Naive thymus-derived CD4-positive, alpha-beta T cell (primary cell): ENCODE measurements at regions of chr9 and their contacts with region 1.

Region 1: GRCh38 chr9:2023532-2023931 is 8.4 kb downstream of the SMARCA2 start:
- DNase-seq: no peak
- ATAC-seq: no peak
- H3K4me3 ChIP-seq: peak overlapping the region; percentile 37
- H3K4me3 Mint-ChIP-seq: peak overlapping the region; percentile 61 to 100 (median 74)
- H3K27ac ChIP-seq: peak overlapping the region; percentile 14
- H3K27ac Mint-ChIP-seq: peak overlapping the region in 8 of 9 donors; percentile 64 to 92 (median 84)
- H3K4me1 ChIP-seq: peaks cover 92 to 93% of the 10 kb centered on the region in 2 donors
- H3K4me1 Mint-ChIP-seq: peaks cover 78 to 100% (median 95%) of the 10 kb centered on the region in 7 donors
- H3K27me3 ChIP-seq: no peaks in the 10 kb centered on the region
- H3K27me3 Mint-ChIP-seq: no peaks in the 10 kb centered on the region

Region 2: GRCh38 chr9:2000314-2000713 is 23.2 kb before region 1 on chr9:
- CTCF ChIA-PET with region 1: no interaction called
- POLR2A ChIA-PET with region 1: no interaction called
- intact Hi-C with region 1: loop called in 1 of 2 experiments (anchors 2 kb)
- DNase-seq: no peak
- ATAC-seq: peak; percentile 32
- H3K4me3 ChIP-seq: no peak overlapping the region
- H3K4me3 Mint-ChIP-seq: no peak overlapping the region
- H3K27ac ChIP-seq: no peak overlapping the region
- H3K27ac Mint-ChIP-seq: no peak overlapping the region
- H3K4me1 ChIP-seq: peaks cover 0 to 9% of the 10 kb centered on the region in 2 donors
- H3K4me1 Mint-ChIP-seq: peaks cover 5 to 22% (median 14%) of the 10 kb centered on the region in 7 donors
- H3K27me3 ChIP-seq: no peaks in the 10 kb centered on the region
- H3K27me3 Mint-ChIP-seq: peaks cover 0 to 27% (median 6%) of the 10 kb centered on the region in 5 donors

Region 3: DNA sequence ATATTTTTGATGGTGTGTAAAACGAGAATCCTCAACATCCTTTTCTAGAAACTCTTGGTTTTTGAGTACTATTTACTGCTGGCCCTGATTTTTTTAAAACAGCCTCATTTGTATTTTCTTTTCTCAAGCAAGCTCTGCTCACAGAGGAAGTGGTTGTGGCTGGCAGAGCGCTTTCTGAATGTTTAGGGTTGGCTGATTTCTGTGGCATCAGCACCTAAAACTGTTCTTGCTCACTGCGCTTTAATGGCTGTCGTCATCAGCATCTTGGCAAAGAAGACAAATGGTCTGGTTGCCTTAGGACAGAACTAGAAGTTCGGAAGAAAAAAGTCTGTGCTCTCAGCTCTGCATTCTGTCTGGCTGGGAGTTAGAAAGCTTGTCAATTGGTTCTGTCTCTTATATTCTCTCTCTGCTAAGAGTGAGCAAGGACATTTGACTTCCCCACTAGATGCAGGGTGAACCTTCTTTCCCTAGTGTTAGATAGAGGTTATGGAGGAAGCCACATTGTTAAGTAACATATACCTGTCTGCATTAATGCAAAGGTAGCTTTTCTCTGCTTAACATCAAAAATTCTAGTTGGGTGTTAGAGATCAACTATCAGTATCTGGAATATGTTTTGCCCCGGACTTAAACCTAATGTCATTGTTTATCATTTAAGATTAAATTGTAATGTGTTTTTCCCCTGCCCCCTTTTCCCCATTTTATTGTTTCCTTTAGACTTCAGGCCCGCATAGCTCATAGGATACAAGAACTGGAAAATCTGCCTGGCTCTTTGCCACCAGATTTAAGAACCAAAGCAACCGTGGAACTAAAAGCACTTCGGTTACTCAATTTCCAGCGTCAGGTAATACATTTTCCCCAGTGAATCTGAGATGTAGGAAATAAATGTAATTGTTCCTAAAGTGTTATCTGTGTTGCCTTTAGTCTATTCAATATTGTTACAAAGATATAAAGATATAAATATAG is 30.6 kb after region 1 on chr9:
- CTCF ChIA-PET with region 1: interaction called, 5 read pairs
- POLR2A ChIA-PET with region 1: interaction called, 98 read pairs
- intact Hi-C with region 1: loop called in 1 of 2 experiments (anchors 1 kb)
- DNase-seq: peak; percentile 23 to 90 (median 83)
- ATAC-seq: peak; percentile 97
- H3K4me3 ChIP-seq: no peak overlapping the region
- H3K4me3 Mint-ChIP-seq: peak overlapping the region; percentile 2 to 79 (median 69)
- H3K27ac ChIP-seq: peak overlapping the region; percentile 60
- H3K27ac Mint-ChIP-seq: peak overlapping the region; percentile 87 to 97 (median 93)
- H3K4me1 ChIP-seq: peaks cover 26 to 29% of the 10 kb centered on the region in 2 donors
- H3K4me1 Mint-ChIP-seq: peaks cover 24 to 71% (median 64%) of the 10 kb centered on the region in 7 donors
- H3K27me3 ChIP-seq: no peaks in the 10 kb centered on the region
- H3K27me3 Mint-ChIP-seq: no peaks in the 10 kb centered on the region

Region 4: GRCh38 chr9:2620919-2621679 is 597.6 kb after region 1 on chr9:
- CTCF ChIA-PET with region 1: no interaction called
- POLR2A ChIA-PET with region 1: no interaction called
- intact Hi-C with region 1: loop called in 1 of 2 experiments (anchors 5 kb)
- DNase-seq: peak in 2 of 9 donors; percentile 7 to 65
- ATAC-seq: peak; percentile 54
- H3K4me3 ChIP-seq: no peak overlapping the region
- H3K4me3 Mint-ChIP-seq: peak overlapping the region; percentile 57 to 89 (median 77)
- H3K27ac ChIP-seq: no peak overlapping the region
- H3K27ac Mint-ChIP-seq: peak overlapping the region in 1 of 9 donors; percentile 82
- H3K4me1 ChIP-seq: peaks cover 0 to 7% of the 10 kb centered on the region in 2 donors
- H3K4me1 Mint-ChIP-seq: peaks cover 12 to 30% (median 21%) of the 10 kb centered on the region in 7 donors
- H3K27me3 ChIP-seq: peaks cover 0 to 9% of the 10 kb centered on the region in 2 donors
- H3K27me3 Mint-ChIP-seq: peaks cover 50 to 73% (median 65%) of the 10 kb centered on the region in 5 donors

Region 5: GRCh38 chr9:2764353-2764752 is 740.8 kb after region 1 on chr9:
- CTCF ChIA-PET with region 1: no interaction called
- POLR2A ChIA-PET with region 1: no interaction called
- intact Hi-C with region 1: loop called in 1 of 2 experiments (anchors 10 kb)
- DNase-seq: peak in 7 of 9 donors; percentile 3 to 49 (median 23)
- ATAC-seq: peak; percentile 62
- H3K4me3 ChIP-seq: no peak overlapping the region
- H3K4me3 Mint-ChIP-seq: peak overlapping the region in 7 of 10 donors; percentile 3 to 72 (median 36)
- H3K27ac ChIP-seq: peak overlapping the region; percentile 8
- H3K27ac Mint-ChIP-seq: peak overlapping the region; percentile 47 to 93 (median 81)
- H3K4me1 ChIP-seq: peaks cover 0 to 7% of the 10 kb centered on the region in 2 donors
- H3K4me1 Mint-ChIP-seq: peaks cover 21 to 39% (median 33%) of the 10 kb centered on the region in 7 donors
- H3K27me3 ChIP-seq: no peaks in the 10 kb centered on the region
- H3K27me3 Mint-ChIP-seq: no peaks in the 10 kb centered on the region